AG04449 (cell line): ENCODE measurements at regions of chr13 and their contacts with region 1.

Region 1: DNA sequence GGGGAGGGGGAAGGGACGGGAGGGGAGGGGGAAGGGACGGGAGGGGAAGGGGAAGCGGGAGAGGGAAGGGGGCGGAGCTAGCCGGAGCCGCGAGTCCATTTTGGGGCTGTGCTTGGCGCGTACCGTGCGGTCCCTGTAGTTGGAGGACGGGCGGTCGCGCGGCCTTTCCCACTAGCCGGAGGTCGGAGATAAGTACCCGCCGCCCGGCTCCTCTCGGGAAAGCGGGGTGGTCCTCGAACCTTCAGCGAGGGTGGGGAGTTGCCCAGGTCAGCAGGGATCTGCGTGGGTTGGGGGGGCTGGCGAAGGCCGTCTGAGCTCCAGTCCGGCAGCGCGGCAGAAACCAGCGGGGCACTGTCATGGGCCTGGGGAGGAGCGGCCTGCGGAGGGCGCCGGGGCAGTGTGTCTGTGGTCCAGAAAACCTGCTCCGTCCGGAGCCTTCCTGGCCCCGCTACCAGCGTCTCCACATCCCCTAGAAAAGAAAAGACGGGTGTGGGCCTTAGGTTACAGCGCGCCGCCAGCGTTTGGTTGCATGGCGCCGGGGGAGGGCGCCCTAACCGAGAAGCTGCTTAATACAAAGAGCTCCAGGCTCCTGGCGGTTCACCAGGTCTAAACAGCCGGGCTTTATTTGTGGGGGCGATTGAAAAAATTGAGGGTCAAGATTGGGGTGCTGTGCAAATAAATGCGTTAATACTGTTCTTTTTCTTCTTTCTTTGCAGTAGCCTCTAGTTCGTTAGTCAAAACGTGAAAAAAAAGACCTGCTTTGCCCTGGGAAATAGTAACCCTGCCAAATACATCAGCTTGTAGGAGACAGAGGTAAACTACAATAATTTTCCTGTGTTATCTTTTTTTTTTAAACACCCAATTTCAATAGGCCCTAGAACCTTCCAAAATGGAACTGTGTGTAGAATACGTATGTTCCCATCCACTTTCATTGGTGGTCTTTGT is at the start of gene TRIM13:
- DNase-seq: peak; percentile 51
- H3K4me3 ChIP-seq: peak within 1 kb of the TSS; percentile 79
- CTCF ChIP-seq: peak; percentile 79

Region 2: DNA sequence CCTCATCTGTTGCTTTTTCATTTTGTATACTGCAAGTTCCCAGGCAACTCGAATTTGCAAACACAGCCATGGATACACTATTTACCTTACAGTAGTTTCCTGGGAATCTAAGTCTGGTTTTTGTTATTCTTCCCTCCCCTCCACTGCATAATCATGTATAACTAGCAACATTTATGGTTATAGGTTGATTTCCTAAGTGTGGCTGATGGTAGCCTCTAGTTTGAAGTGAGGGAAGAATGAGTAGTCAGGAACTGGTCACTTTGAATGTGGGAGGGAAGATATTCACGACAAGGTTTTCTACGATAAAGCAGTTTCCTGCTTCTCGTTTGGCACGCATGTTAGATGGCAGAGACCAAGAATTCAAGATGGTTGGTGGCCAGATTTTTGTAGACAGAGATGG is 18.0 kb after region 1 on chr13 and contains the start of gene KCNRG:
- CTCF ChIA-PET with region 1: interaction called, 38 read pairs
- POLR2A ChIA-PET with region 1: interaction called, 3 read pairs
- DNase-seq: no peak
- H3K4me3 ChIP-seq: no peak within 1 kb of the TSS
- CTCF ChIP-seq: no peak

Region 3: DNA sequence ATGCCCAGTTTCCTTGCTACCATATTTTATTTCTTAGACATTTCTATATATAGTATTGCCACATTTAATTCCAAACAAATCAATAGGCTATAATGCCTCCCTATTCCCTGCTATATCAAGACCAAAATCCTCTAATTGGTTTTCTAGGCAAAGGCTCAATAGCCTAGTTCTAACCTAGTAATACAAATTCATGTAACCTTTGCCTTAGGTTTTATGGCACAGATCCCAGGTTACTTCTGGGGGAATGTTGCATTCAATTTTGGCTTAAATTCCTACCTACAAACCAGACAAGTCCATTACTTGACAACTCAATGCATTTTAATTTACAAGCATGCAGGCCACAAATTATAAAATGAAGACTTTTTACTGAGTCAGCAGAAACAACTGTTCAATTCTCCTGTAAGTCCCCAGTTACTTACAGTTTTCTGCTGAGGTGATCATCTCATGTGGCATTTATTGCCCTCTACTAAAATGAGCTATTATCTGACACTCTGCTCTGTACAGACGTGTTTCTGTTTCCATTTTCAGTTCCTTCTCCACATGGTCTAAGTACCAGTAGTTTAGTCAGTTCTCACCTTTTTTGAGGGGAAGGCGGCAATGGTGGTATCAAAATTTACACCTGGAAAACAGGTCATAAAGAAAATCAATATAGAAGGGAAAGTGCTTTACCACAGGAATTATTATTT is 29.7 kb after region 1 on chr13:
- CTCF ChIA-PET with region 1: interaction called, 10 read pairs
- POLR2A ChIA-PET with region 1: no interaction called
- DNase-seq: no peak
- H3K4me3 ChIP-seq: no peak overlapping the region
- CTCF ChIP-seq: no peak